Activated B cell treated with CpG ODN at 0.5 μM for 24 hours (primary cell): ENCODE measurements at regions of chr15 and their contacts with region 1.

Region 1: DNA sequence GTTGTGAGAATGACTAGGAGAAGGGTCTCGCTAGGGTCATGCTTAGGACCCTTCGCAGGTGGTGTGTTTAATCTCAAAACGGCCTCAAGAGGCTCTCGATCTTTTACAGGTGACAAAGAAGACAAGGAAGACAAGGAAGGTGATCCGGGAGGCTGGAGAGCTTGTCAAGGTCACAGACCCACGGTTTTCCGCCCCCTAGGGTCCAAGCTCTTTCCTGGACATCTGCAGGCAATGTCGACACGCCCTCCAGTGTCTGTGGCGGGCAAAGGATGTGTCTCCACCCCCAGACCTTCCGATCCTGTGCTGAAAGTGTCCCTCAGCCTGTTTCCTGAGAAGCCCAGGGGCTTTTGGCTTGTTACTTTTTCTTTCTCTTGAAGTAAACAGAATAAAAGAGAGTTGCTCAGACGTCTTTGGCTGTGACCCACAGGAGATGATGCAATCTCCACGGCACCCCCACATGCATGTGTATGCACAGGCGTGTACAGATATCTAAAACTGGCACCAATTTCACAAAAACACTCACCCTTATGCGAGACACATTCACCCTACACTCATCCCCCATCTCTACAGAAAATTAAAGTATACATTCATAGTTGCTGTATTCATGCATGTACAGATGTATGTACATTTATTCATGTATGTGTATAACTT is 108.8 kb downstream of the KLF13 start:
- DNase-seq: no peak
- ATAC-seq: peak; percentile 66
- H3K4me3 Mint-ChIP-seq: peak overlapping the region; percentile 80
- H3K27ac Mint-ChIP-seq: peak overlapping the region; percentile 91
- H3K4me1 Mint-ChIP-seq: peaks cover 64% of the 10 kb centered on the region
- H3K27me3 Mint-ChIP-seq: no peaks in the 10 kb centered on the region
- CTCF ChIP-seq: no peak

Region 2: GRCh38 chr15:30770759-30771158 is 664.6 kb before region 1 on chr15:
- CTCF ChIA-PET with region 1: no interaction called
- POLR2A ChIA-PET with region 1: no interaction called
- intact Hi-C with region 1: no loop called
- DNase-seq: no peak
- ATAC-seq: no peak
- H3K4me3 Mint-ChIP-seq: no peak overlapping the region
- H3K27ac Mint-ChIP-seq: no peak overlapping the region
- H3K4me1 Mint-ChIP-seq: no peaks in the 10 kb centered on the region
- H3K27me3 Mint-ChIP-seq: no peaks in the 10 kb centered on the region
- CTCF ChIP-seq: no peak

Region 3: DNA sequence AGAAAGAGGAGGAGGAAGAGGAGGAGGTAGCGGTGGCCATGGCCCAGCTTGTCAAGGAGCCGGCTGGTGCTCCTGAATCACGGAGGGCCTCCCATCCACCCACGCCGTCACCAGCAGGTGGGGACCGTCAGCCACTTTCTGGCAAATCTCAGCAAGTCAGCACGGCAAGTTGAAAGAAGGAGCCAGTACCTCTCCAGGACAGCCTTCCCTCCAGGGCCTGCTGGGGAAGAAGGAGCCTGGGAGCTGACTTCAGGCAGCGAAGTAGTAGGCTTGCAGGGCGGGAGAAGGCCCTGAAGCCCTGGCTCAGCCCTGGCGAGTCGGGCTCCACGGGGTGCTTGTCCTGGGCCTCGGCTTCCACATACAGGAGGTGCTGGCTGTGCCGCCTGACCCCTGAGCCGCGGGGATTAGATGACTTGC is 234.6 kb before region 1 on chr15:
- CTCF ChIA-PET with region 1: interaction called, 11 read pairs
- POLR2A ChIA-PET with region 1: interaction called, 3 read pairs
- intact Hi-C with region 1: loop called (anchors 1 kb)
- DNase-seq: peak; percentile 42
- ATAC-seq: peak; percentile 45
- H3K4me3 Mint-ChIP-seq: no peak overlapping the region
- H3K27ac Mint-ChIP-seq: no peak overlapping the region
- H3K4me1 Mint-ChIP-seq: peaks cover 29% of the 10 kb centered on the region
- H3K27me3 Mint-ChIP-seq: no peaks in the 10 kb centered on the region
- CTCF ChIP-seq: no peak

Region 4: DNA sequence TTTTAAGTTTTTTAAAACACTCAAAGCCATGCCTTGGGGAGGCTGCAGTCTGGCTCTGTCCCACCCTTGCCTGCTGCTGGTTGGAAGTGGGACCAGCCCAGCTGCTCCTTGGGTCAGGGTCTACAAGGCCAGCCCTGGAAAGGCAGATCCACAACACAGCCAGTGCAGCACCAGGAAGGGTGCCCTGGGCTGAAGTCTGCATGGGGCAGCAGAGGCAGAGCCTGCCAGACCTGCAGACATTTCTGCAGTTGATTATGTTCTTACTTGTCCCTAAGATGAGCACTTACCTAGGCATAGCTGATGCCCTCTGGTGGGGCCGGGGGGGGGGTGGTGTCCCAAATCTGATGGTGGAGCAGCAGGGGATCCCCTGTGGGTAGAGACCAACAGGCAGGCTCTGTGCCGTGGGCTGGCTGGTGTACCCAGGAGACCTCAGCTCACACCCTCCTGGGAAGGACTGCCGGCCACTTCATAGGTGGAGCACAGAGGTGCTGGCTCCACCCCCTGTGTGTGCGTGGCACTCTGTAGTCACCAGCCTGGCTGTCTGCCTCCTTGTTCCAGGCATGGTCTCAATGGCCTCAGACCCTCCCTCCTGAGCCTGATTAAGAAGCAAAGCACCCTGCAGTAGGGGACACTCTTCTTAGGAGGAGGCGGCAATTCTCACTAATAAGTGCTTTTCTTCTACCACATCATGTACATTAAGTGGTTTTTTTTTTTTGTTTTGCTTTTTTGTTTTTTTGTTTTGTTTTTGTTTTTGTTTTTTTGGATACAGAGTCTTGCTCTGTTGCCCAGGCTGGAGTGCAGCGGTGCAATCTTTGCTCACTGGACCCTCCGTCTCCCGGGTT is 206.2 kb before region 1 on chr15:
- CTCF ChIA-PET with region 1: interaction called, 6 read pairs
- POLR2A ChIA-PET with region 1: interaction called, 18 read pairs
- intact Hi-C with region 1: loop called (anchors 1 kb)
- DNase-seq: peak; percentile 52
- ATAC-seq: peak; percentile 64
- H3K4me3 Mint-ChIP-seq: peak overlapping the region; percentile 85
- H3K27ac Mint-ChIP-seq: peak overlapping the region; percentile 98
- H3K4me1 Mint-ChIP-seq: peaks cover 96% of the 10 kb centered on the region
- H3K27me3 Mint-ChIP-seq: no peaks in the 10 kb centered on the region
- CTCF ChIP-seq: no peak

Region 5: DNA sequence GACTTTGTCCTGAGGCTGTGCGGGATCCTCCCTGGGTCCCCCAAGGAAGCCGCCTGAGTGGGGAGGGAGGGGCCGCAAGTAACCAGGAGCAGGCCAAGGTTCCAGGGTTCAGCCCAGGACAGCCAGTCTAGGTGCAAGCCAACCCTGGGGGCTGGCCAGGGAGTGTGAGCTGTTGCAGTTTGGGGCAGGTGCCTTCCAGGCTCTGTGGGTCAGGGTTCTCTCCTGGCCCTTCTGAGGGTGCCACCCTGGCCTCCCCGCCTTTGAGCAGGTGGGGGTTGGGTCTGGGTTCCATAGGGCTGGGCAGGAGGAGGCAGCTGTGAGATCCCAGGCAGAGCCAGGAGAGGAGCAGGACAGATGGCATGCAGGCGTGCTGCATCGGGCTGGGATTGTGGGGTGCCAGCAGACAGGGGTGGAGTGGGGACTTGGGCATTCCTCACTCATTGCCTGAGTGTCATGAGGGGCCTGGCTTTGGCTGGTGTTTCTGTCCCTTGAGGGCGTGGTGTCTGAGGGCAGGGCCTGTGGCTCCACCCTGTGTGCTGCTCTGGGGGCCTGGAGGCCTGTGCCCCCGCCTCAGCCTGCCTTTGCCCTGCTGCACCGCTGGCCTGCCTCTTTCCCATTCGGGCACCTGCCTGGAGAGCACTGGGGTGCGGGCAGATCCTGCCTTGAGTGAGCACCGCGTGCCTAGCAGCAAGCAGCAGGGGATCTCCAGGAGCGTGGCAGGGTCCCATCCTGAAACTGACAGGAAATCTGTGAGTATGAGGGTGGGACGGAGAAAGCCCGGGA is 90.4 kb before region 1 on chr15:
- CTCF ChIA-PET with region 1: interaction called, 7 read pairs
- POLR2A ChIA-PET with region 1: interaction called, 17 read pairs
- intact Hi-C with region 1: no loop called
- DNase-seq: peak; percentile 41
- ATAC-seq: peak; percentile 67
- H3K4me3 Mint-ChIP-seq: peak overlapping the region; percentile 88
- H3K27ac Mint-ChIP-seq: peak overlapping the region; percentile 91
- H3K4me1 Mint-ChIP-seq: peaks cover 100% of the 10 kb centered on the region
- H3K27me3 Mint-ChIP-seq: no peaks in the 10 kb centered on the region
- CTCF ChIP-seq: no peak

Region 6: GRCh38 chr15:31365655-31366127 is 69.7 kb before region 1 on chr15:
- CTCF ChIA-PET with region 1: interaction called, 27 read pairs
- POLR2A ChIA-PET with region 1: interaction called, 15 read pairs
- intact Hi-C with region 1: loop called (anchors 1 kb)
- DNase-seq: peak; percentile 48
- ATAC-seq: peak; percentile 48
- H3K4me3 Mint-ChIP-seq: peak overlapping the region; percentile 67
- H3K27ac Mint-ChIP-seq: peak overlapping the region; percentile 66
- H3K4me1 Mint-ChIP-seq: peaks cover 99% of the 10 kb centered on the region
- H3K27me3 Mint-ChIP-seq: no peaks in the 10 kb centered on the region
- CTCF ChIP-seq: no peak

Region 7: GRCh38 chr15:31458591-31459399 is 23.4 kb after region 1 on chr15:
- CTCF ChIA-PET with region 1: interaction called, 15 read pairs
- POLR2A ChIA-PET with region 1: interaction called, 13 read pairs
- intact Hi-C with region 1: no loop called
- DNase-seq: no peak
- ATAC-seq: peak; percentile 98
- H3K4me3 Mint-ChIP-seq: peak overlapping the region; percentile 64
- H3K27ac Mint-ChIP-seq: peak overlapping the region; percentile 56
- H3K4me1 Mint-ChIP-seq: peaks cover 47% of the 10 kb centered on the region
- H3K27me3 Mint-ChIP-seq: no peaks in the 10 kb centered on the region
- CTCF ChIP-seq: no peak

Region 8: DNA sequence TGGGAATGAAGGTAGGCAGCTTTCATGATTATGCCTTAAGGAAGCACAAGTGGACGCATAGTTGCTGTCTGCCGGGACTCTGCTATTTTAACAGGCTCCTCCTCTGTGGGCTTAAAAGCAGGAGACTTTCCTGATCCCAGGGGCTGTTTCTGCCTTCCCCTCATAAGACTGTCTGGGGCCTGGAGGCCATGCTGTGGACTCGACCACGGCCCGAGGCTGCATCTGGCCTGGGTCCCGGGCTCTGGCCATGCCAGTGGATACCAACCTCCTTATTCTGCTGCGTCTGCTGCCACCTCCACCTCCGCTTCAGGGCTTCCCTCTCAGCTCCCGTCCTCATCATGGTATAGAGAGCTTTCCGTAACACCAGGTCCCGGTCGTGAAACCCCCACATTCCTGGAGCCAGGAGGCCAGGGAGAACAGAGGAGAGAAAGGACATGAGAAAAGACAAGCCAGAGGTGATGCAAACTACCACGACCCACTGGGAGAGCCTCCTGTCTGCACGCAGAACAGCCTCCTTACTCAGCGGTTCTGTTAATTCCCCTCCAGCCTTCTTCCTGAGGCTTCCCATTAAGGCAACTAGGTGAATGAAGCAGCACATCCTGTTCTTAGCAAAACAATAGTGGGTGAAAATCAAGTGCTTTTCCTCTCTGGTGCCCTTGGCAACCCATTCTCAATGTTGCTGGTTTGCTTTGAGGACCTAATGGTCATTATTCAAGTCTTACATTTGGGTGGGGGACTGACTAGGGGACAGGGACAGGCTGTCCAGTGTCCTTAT is 91.7 kb after region 1 on chr15:
- CTCF ChIA-PET with region 1: no interaction called
- POLR2A ChIA-PET with region 1: no interaction called
- intact Hi-C with region 1: no loop called
- DNase-seq: no peak
- ATAC-seq: no peak
- H3K4me3 Mint-ChIP-seq: no peak overlapping the region
- H3K27ac Mint-ChIP-seq: no peak overlapping the region
- H3K4me1 Mint-ChIP-seq: no peaks in the 10 kb centered on the region
- H3K27me3 Mint-ChIP-seq: peaks cover 21% of the 10 kb centered on the region
- CTCF ChIP-seq: no peak

Region 9: DNA sequence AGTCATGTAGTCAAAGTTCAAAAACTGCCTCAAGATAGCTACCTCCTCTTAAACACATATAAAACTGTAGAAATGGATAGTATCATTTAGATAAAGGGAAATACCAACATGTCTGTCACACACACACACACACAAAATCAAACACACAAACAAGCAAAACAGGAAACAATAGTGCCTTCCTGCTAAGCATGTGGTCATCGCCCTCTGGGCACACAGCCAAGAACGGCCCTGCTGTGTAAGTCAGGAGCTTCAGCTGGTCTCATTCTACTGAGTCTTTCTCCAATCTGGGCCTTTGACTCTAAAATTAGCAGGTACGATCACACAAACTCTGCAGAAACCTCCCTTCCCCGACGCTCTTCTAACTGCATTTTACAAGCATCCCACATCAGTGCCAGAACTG is 322.7 kb after region 1 on chr15:
- CTCF ChIA-PET with region 1: no interaction called
- POLR2A ChIA-PET with region 1: no interaction called
- intact Hi-C with region 1: no loop called
- DNase-seq: no peak
- ATAC-seq: no peak
- H3K4me3 Mint-ChIP-seq: no peak overlapping the region
- H3K27ac Mint-ChIP-seq: no peak overlapping the region
- H3K4me1 Mint-ChIP-seq: no peaks in the 10 kb centered on the region
- H3K27me3 Mint-ChIP-seq: peaks cover 13% of the 10 kb centered on the region
- CTCF ChIP-seq: no peak

Region 10: GRCh38 chr15:32636908-32637567 is 1201.7 kb after region 1 on chr15:
- CTCF ChIA-PET with region 1: no interaction called
- POLR2A ChIA-PET with region 1: no interaction called
- intact Hi-C with region 1: no loop called
- DNase-seq: no peak
- ATAC-seq: peak; percentile 61
- H3K4me3 Mint-ChIP-seq: no peak overlapping the region
- H3K27ac Mint-ChIP-seq: no peak overlapping the region
- H3K4me1 Mint-ChIP-seq: peaks cover 19% of the 10 kb centered on the region
- H3K27me3 Mint-ChIP-seq: no peaks in the 10 kb centered on the region
- CTCF ChIP-seq: no peak